OCI-LY7 (cell line): ENCODE measurements at regions of chr18 and their contacts with region 1.

Region 1: GRCh38 chr18:26022585-26022984 is 67.8 kb downstream of the SS18 start:
- DNase-seq: no peak
- H3K4me3 ChIP-seq: no peak overlapping the region
- H3K27ac ChIP-seq: no peak overlapping the region
- H3K4me1 ChIP-seq: no peaks in the 10 kb centered on the region
- CTCF ChIP-seq: no peak

Region 2: GRCh38 chr18:26008619-26009018 is 14.0 kb before region 1 on chr18:
- CTCF ChIA-PET with region 1: no interaction called
- POLR2A ChIA-PET with region 1: interaction called, 12 read pairs
- intact Hi-C with region 1: no loop called
- DNase-seq: no peak
- H3K4me3 ChIP-seq: no peak overlapping the region
- H3K27ac ChIP-seq: no peak overlapping the region
- H3K4me1 ChIP-seq: no peaks in the 10 kb centered on the region
- CTCF ChIP-seq: no peak

Region 3: GRCh38 chr18:26057344-26057773 is 34.8 kb after region 1 on chr18:
- CTCF ChIA-PET with region 1: no interaction called
- POLR2A ChIA-PET with region 1: interaction called, 3 read pairs
- intact Hi-C with region 1: loop called (anchors 5 kb)
- DNase-seq: no peak
- H3K4me3 ChIP-seq: no peak overlapping the region
- H3K27ac ChIP-seq: no peak overlapping the region
- H3K4me1 ChIP-seq: peaks cover under 1% of the 10 kb centered on the region
- CTCF ChIP-seq: no peak

Region 4: GRCh38 chr18:26119246-26119645 is 96.7 kb after region 1 on chr18:
- CTCF ChIA-PET with region 1: no interaction called
- POLR2A ChIA-PET with region 1: no interaction called
- intact Hi-C with region 1: no loop called
- DNase-seq: no peak
- H3K4me3 ChIP-seq: no peak overlapping the region
- H3K27ac ChIP-seq: no peak overlapping the region
- H3K4me1 ChIP-seq: no peaks in the 10 kb centered on the region
- CTCF ChIP-seq: no peak

Region 5: GRCh38 chr18:26190506-26190905 is 167.9 kb after region 1 on chr18:
- CTCF ChIA-PET with region 1: no interaction called
- POLR2A ChIA-PET with region 1: no interaction called
- intact Hi-C with region 1: no loop called
- DNase-seq: peak; percentile 94
- H3K4me3 ChIP-seq: peak overlapping the region; percentile 56
- H3K27ac ChIP-seq: peak overlapping the region; percentile 99
- H3K4me1 ChIP-seq: peaks cover 55% of the 10 kb centered on the region
- CTCF ChIP-seq: no peak